ENCODE measurements at regions of chr19 and their contacts with region 1.

Region 1: DNA sequence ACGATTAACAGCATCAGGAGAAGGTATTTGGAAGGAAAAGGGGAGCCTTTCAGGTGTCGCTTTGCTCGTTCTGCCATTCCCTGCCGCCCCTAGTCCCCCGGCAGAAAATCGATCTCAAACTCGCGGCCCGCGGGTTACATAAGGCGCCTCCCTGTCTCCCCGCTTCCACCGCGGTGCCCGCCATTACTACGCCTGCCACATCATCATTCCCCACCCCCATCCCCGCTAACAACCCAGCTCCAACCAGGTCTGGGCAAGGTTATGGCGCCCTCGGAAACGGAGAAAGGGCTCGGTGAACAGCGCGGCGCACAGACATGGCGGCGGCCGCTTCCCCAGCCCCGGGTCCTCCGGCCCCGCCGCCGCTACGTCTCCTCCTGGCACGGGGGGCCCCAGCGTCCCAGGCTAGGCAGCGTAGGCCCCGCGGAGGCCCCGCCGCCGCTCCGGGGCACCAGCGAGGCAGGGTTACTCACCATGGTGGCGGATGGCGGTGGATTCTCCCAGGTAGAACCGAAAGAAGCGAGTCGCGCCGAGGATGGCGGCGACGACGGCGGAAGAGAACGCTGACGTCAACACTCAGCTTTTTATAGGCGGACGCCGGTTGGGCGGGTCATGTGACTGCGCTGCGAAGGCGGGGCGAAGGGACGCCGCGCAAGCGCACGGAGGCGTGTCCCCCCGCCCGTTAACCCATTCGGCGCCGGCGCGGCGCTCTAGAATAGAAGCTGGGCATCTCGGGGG is at the start of gene EEF2:
- DNase-seq: peak; percentile 97
- H3K4me3 Mint-ChIP-seq: peak within 1 kb of the TSS; percentile 94
- H3K27ac Mint-ChIP-seq: peak within 1 kb of the TSS; percentile 93
- H3K4me1 Mint-ChIP-seq: peaks cover 31% of the 10 kb centered on the region
- H3K27me3 Mint-ChIP-seq: no peaks in the 10 kb centered on the region
- total RNA-seq, gene EEF2: 2,394 and 2,438 TPM in 2 replicates

Region 2: GRCh38 chr19:3762501-3763459 is 222.3 kb before region 1 on chr19 and contains the start of gene MRPL54:
- intact Hi-C with region 1: loop called (anchors 5 kb)
- DNase-seq: peak; percentile 100
- H3K4me3 Mint-ChIP-seq: peak within 1 kb of the TSS; percentile 99
- H3K27ac Mint-ChIP-seq: peak within 1 kb of the TSS; percentile 100
- H3K4me1 Mint-ChIP-seq: peaks cover 32% of the 10 kb centered on the region
- H3K27me3 Mint-ChIP-seq: peaks cover 5% of the 10 kb centered on the region
- total RNA-seq, gene MRPL54: 91.4 and 96.6 TPM in 2 replicates

Region 3: DNA sequence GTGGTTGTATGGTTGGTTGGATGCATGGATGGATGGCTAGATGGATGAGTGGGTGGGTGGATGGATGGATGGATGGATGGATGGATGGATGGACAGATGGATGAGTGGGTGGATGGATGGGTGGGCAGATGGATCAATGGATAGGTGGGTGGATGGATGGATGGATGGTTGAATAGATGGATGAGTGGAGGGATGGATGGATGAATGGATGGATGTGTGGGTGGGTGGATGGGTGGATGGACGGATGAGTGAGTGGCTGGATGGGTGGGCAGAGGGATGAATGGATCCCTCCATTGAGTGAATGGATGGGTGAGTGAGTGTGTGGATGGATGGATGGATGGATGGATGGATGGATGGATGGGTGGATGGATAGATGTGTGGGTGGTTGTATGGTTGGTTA is 61.2 kb before region 1 on chr19:
- intact Hi-C with region 1: no loop called
- DNase-seq: no peak
- H3K4me3 Mint-ChIP-seq: no peak overlapping the region
- H3K27ac Mint-ChIP-seq: no peak overlapping the region
- H3K4me1 Mint-ChIP-seq: no peaks in the 10 kb centered on the region
- H3K27me3 Mint-ChIP-seq: no peaks in the 10 kb centered on the region

Region 4: GRCh38 chr19:3950871-3951861 is 33.9 kb before region 1 on chr19:
- intact Hi-C with region 1: no loop called
- DNase-seq: no peak
- H3K4me3 Mint-ChIP-seq: no peak overlapping the region
- H3K27ac Mint-ChIP-seq: no peak overlapping the region
- H3K4me1 Mint-ChIP-seq: no peaks in the 10 kb centered on the region
- H3K27me3 Mint-ChIP-seq: peaks cover 2% of the 10 kb centered on the region

Region 5: GRCh38 chr19:4007021-4007835 is 22.2 kb after region 1 on chr19 and contains the start of gene PIAS4:
- intact Hi-C with region 1: loop called (anchors 1 kb)
- DNase-seq: peak; percentile 98
- H3K4me3 Mint-ChIP-seq: peak within 1 kb of the TSS; percentile 90
- H3K27ac Mint-ChIP-seq: peak within 1 kb of the TSS; percentile 90
- H3K4me1 Mint-ChIP-seq: peaks cover 16% of the 10 kb centered on the region
- H3K27me3 Mint-ChIP-seq: no peaks in the 10 kb centered on the region
- total RNA-seq, gene PIAS4: 32.2 and 33.2 TPM in 2 replicates

Region 6: GRCh38 chr19:4139614-4140236 is 154.7 kb after region 1 on chr19:
- intact Hi-C with region 1: loop called (anchors 2 kb)
- DNase-seq: peak; percentile 96
- H3K4me3 Mint-ChIP-seq: peak overlapping the region; percentile 4
- H3K27ac Mint-ChIP-seq: peak overlapping the region; percentile 2
- H3K4me1 Mint-ChIP-seq: peaks cover 8% of the 10 kb centered on the region
- H3K27me3 Mint-ChIP-seq: peaks cover 6% of the 10 kb centered on the region

Region 7: GRCh38 chr19:4199699-4200293 is 214.7 kb after region 1 on chr19:
- intact Hi-C with region 1: loop called (anchors 5 kb)
- DNase-seq: no peak
- H3K4me3 Mint-ChIP-seq: no peak overlapping the region
- H3K27ac Mint-ChIP-seq: no peak overlapping the region
- H3K4me1 Mint-ChIP-seq: peaks cover 10% of the 10 kb centered on the region
- H3K27me3 Mint-ChIP-seq: peaks cover 24% of the 10 kb centered on the region